GM10248 (cell line): ENCODE measurements at regions of chr18 and their contacts with region 1.

Region 1: DNA sequence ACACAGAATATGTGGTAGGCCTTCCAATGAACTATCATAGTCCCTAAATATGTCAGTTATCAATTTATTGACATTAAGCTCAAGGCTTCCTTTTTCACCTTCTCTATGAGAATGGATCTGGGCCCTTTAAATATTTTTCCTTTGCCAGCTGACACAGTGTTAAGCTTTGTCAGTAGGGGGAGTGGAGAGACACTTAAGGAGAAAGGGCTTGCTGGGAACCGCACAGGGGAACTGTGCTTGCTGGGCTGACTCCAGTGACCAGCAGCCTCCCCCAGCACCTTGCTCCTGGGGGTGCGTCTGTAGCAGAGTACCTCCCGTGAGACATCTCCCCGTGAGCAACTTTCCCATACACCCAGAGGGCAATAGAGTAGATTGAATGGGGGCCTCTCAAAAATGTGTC is 6.5 kb upstream of the PTPN2 start:
- DNase-seq: no peak
- CTCF ChIP-seq: no peak

Region 2: GRCh38 chr18:12574494-12575185 is 315.9 kb before region 1 on chr18:
- CTCF ChIA-PET with region 1: no interaction called
- POLR2A ChIA-PET with region 1: no interaction called
- DNase-seq: no peak
- CTCF ChIP-seq: no peak

Region 3: GRCh38 chr18:12639990-12640880 is 250.3 kb before region 1 on chr18:
- CTCF ChIA-PET with region 1: no interaction called
- POLR2A ChIA-PET with region 1: no interaction called
- DNase-seq: no peak
- CTCF ChIP-seq: no peak

Region 4: GRCh38 chr18:12726774-12727550 is 163.5 kb before region 1 on chr18:
- CTCF ChIA-PET with region 1: interaction called, 57 read pairs
- POLR2A ChIA-PET with region 1: no interaction called
- DNase-seq: peak; percentile 72
- CTCF ChIP-seq: peak; percentile 83

Region 5: DNA sequence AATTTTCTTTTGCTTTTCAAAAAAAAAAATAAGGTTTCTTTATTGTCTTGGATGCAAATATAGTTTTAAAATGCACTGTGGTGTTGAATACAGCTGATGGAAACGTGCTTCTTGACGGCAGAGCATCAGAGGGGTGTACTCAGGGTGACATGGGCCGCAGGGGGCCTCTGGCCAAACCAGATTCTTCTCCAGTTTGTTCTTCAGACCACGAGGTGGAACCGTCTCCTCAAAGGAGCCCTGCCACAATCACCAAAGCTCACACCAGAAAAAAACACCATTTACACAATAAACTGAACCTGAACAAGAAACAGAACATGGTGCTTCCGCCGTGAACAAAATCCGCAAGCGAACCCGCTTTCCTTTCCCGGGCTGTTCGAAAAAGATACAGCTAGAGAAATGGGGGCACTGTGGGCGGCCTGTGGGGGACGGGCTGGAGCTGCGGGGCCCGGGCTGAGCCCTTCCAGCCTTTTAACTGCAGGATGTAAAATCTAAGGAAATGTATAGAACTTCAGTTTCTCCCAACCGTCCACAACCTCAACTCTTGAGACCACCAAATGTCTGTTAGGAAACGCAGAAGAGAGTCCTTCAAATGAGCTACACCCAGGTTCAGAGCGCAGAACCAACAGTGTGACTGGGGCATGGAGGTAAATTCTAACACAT is 153.1 kb before region 1 on chr18:
- CTCF ChIA-PET with region 1: interaction called, 42 read pairs
- POLR2A ChIA-PET with region 1: no interaction called
- DNase-seq: no peak
- CTCF ChIP-seq: no peak

Region 6: GRCh38 chr18:12744103-12744502 is 146.4 kb before region 1 on chr18:
- CTCF ChIA-PET with region 1: interaction called, 42 read pairs
- POLR2A ChIA-PET with region 1: no interaction called
- DNase-seq: peak; percentile 68
- CTCF ChIP-seq: peak; percentile 58

Region 7: DNA sequence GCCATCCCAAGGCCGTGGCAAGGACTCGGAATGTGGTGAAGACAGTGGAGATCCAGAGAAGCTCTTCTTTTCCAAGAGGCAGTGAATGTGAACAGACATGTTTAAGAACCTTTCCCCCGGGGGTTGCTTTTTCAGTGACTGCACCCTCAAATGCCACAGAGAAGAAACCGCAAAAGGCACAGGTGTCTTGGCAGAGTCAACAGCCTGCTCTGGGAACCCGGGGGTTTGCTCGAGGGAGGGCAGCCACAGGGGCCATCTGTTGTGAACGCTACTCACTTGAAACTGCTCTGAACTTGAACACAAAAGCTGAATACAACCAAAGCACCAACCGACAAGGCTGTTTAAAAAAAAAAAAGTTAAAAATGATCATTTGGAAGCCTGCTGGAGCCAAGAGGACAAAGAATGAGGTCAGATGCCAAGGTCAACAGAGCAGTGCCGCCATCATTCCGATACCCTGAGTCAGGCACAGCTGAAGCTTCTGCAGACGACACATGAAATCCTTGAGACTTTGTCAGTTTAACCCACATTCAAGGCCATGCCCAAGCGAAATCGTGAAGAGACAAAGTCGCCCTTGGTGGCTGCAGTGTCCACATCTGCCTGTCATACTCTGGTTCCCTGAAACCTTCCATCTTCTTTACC is 140.3 kb before region 1 on chr18:
- CTCF ChIA-PET with region 1: interaction called, 42 read pairs
- POLR2A ChIA-PET with region 1: no interaction called
- DNase-seq: no peak
- CTCF ChIP-seq: no peak

Region 8: DNA sequence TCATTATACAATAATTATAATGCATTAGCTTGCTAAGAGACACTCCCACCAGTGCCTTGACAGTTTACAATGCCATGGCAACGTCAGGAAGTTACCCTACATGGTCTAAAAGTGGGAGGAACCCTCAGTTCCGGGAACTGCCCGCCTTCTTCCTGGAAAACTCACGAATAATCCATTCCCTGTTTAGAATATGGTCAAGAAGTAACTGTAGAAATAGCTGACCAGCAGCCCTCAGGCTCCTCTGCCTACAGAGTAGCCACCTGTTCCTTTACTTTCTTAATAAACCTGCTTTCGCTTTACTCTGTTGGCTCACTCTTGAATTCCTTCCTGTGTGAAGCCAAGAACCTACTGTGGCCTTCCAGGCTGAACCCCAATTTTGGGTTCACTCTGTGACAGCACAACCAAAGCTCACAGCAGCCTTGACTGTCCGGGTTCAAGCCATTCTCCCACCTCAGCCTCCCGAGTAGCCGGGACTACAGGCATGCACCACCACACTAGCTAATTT is 13.6 kb after region 1 on chr18:
- CTCF ChIA-PET with region 1: interaction called, 41 read pairs
- POLR2A ChIA-PET with region 1: no interaction called
- DNase-seq: no peak
- CTCF ChIP-seq: no peak

Region 9: GRCh38 chr18:13086906-13087305 is 196.4 kb after region 1 on chr18:
- CTCF ChIA-PET with region 1: no interaction called
- POLR2A ChIA-PET with region 1: no interaction called
- DNase-seq: no peak
- CTCF ChIP-seq: no peak